Thyroid gland (tissue), 4 donors: ENCODE measurements at regions of chr3 and their contacts with region 1.

Region 1: GRCh38 chr3:146326670-146327543 is 76.0 kb upstream of the PLSCR4 start:
- DNase-seq: peak; percentile 41 to 49
- H3K4me3 ChIP-seq: no peak overlapping the region
- H3K27ac ChIP-seq: no peak overlapping the region
- H3K4me1 ChIP-seq: no peaks in the 10 kb centered on the region
- H3K27me3 ChIP-seq: no peaks in the 10 kb centered on the region
- CTCF ChIP-seq: peak; percentile 16 to 84 (median 60)
- POLR2A ChIP-seq: no peak

Region 2: DNA sequence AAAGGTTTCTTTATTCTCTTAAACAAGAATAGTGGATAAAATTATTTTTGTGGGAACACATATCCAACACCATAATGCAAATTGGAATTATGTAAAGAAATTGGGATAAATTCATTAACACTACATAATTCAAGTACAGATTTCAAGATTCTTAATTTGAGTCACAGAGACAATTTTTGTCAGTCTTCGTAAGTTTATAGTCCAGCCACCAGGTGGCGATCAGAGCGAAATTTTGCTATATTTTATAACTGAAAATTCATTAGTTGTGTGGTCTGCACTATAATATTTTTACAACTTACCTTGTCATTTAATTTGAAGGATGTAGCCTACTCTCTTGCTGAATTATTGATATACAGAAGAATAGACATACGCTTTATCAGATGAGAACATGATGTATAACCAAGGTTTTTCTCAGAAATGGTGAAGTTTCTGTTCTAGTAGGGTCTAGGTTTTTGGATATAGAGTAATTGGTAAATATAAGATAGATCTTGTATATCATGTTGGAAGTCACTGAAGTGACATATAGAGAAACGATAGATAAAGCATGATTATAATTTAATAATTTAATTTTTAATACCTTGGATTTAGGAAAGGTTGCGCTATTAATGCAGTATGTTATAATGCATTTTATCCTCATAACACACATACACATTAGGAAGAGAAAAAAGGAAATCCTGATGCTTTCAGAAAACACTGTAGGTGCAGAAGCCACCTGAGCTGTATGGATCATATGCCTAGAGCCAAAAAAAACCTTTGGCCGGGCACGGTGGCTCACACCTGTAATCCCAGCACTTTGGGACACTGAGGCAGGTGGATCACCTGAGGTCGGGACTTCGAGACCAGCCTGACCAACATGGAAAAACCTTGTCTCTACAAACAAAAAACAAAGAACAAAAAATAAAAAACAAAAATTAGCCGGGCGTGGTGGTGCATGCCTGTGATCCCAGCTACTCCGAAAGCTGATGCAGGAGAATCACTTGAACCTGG is 107.7 kb before region 1 on chr3:
- intact Hi-C with region 1: loop called (anchors 2 kb)
- DNase-seq: peak; percentile 27 to 42
- H3K4me3 ChIP-seq: no peak overlapping the region
- H3K27ac ChIP-seq: no peak overlapping the region
- H3K4me1 ChIP-seq: peaks cover 0 to 17% of the 10 kb centered on the region in 2 donors
- H3K27me3 ChIP-seq: no peaks in the 10 kb centered on the region
- CTCF ChIP-seq: peak; percentile 40 to 81 (median 68)
- POLR2A ChIP-seq: no peak